Cardiac septum (tissue), 1 donor: ENCODE measurements at regions of chr15 and their contacts with region 1.

Region 1: GRCh38 chr15:74036271-74037170 is 42.0 kb downstream of the PML start:
- DNase-seq: no peak

Region 2: DNA sequence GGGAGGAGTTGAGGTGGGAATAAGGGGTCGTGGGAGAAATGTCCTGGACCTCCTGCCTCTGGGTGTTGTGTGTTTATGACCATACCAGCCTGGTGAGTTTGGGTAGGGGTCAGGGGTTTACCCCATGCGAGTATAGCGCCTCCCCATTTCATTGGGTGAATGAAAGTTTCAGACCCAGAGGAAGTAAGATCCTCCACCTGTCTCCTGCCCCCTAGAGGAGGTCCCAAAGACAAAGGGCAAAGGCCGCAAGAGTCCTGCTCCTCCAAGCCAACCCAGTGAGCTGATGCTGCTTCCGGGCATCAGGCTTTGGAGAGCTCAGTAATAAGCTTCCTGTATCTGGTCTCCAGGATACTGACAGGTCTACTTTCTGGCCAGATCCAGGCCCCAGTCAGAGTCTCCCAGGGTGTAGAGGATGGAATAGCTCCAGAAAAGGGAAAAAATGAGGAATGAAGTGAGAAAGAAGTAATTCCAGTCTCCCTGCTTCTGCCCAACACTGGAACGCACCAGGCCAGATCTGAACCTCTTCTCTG is 169.6 kb before region 1 on chr15:
- intact Hi-C with region 1: no loop called
- DNase-seq: no peak

Region 3: GRCh38 chr15:73972984-73973682 is 63.4 kb before region 1 on chr15:
- intact Hi-C with region 1: loop called (anchors 2 kb)
- DNase-seq: peak; percentile 94

Region 4: GRCh38 chr15:73991726-73992593 is 44.6 kb before region 1 on chr15 and contains the start of gene STOML1:
- intact Hi-C with region 1: loop called (anchors 2 kb)
- DNase-seq: peak; percentile 97
- total RNA-seq, gene STOML1: 32.1 TPM

Region 5: GRCh38 chr15:74443100-74443909 is 406.8 kb after region 1 on chr15:
- intact Hi-C with region 1: no loop called
- DNase-seq: peak; percentile 39